Activated T-helper 1 cell treated with anti-CD3 and anti-CD28 coated beads, Interleukin-12 subunit alpha, Interleukin-12 subunit beta, Interleukin-2, Interleukin-4 antibody, amounts not matched to agents 30 ng/mL and 10 ng/mL and 1 ng/mL, durations not matched to agents 14 hours and 24 hours and 36 hours (primary cell): ENCODE measurements at regions of chr11 and their contacts with region 1.

Region 1: DNA sequence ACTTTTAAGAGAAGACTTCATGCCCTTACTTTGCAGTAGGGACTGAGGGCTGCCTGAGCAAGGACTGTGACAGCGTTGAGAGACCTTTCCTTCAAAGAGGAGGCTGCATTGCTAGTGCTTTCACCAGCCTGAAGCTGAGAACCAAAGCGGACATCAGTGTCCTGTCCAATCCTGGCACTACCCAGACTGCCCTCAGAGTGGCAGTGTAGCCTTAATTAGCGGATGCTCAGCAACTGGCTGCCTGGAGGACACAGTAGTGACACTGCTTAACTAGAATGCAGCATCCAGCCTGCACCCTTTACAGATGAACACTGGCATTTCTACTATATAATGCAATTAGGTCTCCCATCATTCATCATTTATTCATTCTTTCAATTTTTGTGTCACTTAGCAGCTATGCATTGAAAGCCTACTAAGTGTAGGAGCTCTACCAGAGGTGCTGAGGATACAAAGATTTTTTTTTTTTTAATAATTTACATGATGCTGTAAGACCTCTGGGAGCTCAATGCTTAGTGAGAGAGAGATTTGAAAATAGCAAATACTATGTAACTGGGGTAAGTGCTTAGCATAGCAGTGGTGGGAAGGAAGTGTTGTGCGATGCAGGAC is 36.9 kb upstream of the SLC36A4 start:
- DNase-seq: peak; percentile 55
- H3K4me3 Mint-ChIP-seq: no peak overlapping the region
- H3K27ac Mint-ChIP-seq: no peak overlapping the region
- H3K4me1 Mint-ChIP-seq: no peaks in the 10 kb centered on the region
- H3K27me3 Mint-ChIP-seq: peaks cover 22% of the 10 kb centered on the region

Region 2: GRCh38 chr11:92642177-92642931 is 592.4 kb before region 1 on chr11:
- intact Hi-C with region 1: no loop called
- DNase-seq: no peak
- H3K4me3 Mint-ChIP-seq: no peak overlapping the region
- H3K27ac Mint-ChIP-seq: no peak overlapping the region
- H3K4me1 Mint-ChIP-seq: no peaks in the 10 kb centered on the region
- H3K27me3 Mint-ChIP-seq: no peaks in the 10 kb centered on the region

Region 3: DNA sequence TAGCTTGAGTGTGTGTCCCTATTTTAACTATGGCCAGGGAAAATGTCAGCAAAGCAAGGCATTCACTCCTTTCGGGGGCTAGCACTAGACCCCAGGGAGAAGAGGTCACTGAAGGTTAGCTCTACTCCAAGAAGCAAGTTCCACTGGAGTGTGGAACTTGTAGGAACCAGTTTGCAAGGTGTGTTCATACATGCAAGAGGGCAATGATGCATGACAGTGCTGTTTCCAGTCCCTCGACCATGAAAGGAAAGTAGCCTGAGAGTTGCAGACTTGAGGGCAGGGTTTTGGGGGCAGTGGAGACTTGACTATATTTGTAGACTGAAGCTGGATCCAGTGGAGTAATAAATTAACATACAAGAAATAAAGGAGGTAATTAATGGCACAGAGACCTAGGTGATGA is 15.3 kb before region 1 on chr11:
- intact Hi-C with region 1: no loop called
- DNase-seq: no peak
- H3K4me3 Mint-ChIP-seq: no peak overlapping the region
- H3K27ac Mint-ChIP-seq: no peak overlapping the region
- H3K4me1 Mint-ChIP-seq: no peaks in the 10 kb centered on the region
- H3K27me3 Mint-ChIP-seq: peaks cover 11% of the 10 kb centered on the region

Region 4: DNA sequence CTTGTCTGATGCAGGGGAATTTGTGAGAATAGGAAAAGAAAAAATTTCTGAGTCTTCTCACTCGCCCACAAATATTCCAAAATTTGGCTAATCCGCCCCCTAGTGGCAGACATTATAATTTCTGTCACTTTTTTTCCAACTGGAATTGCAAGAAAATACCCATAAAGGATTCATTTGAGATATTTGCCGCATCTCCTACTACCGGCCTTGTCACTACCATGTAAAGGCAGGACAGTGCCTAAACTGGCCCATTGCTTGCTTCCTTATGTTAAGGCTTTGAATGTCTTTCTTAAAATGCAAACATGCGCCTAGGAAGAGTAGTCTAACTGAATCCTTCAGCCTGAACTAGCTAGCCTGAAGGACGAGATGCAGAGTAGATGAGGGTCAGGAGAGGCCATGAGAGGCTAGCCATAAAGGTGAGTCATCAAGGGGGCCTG is 417.5 kb after region 1 on chr11:
- intact Hi-C with region 1: loop called (anchors 1 kb)
- DNase-seq: no peak
- H3K4me3 Mint-ChIP-seq: no peak overlapping the region
- H3K27ac Mint-ChIP-seq: no peak overlapping the region
- H3K4me1 Mint-ChIP-seq: peaks cover 22% of the 10 kb centered on the region
- H3K27me3 Mint-ChIP-seq: peaks cover 18% of the 10 kb centered on the region

Region 5: GRCh38 chr11:93727985-93728791 is 493.5 kb after region 1 on chr11:
- intact Hi-C with region 1: loop called (anchors 10 kb)
- DNase-seq: no peak
- H3K4me3 Mint-ChIP-seq: no peak overlapping the region
- H3K27ac Mint-ChIP-seq: peak overlapping the region; percentile 25
- H3K4me1 Mint-ChIP-seq: peaks cover 42% of the 10 kb centered on the region
- H3K27me3 Mint-ChIP-seq: no peaks in the 10 kb centered on the region